ENCODE measurements at regions of chr6 and their contacts with region 1.

Region 1: GRCh38 chr6:117555882-117556498 is 46.3 kb downstream of the GOPC start:
- DNase-seq: peak in 2 of 4 donors; percentile 51 to 60
- ATAC-seq: peak; percentile 69
- H3K4me3 ChIP-seq: no peak overlapping the region
- H3K27ac ChIP-seq: no peak overlapping the region
- H3K4me1 ChIP-seq: peaks cover 0 to 4% of the 10 kb centered on the region in 2 donors
- H3K27me3 ChIP-seq: no peaks in the 10 kb centered on the region
- CTCF ChIP-seq: peak; percentile 78 to 84

Region 2: GRCh38 chr6:117449549-117450439 is 106.2 kb before region 1 on chr6:
- intact Hi-C with region 1: loop called (anchors 10 kb)
- DNase-seq: peak; percentile 40 to 82 (median 59)
- ATAC-seq: peak; percentile 57
- H3K4me3 ChIP-seq: no peak overlapping the region
- H3K27ac ChIP-seq: peak overlapping the region; percentile 51 to 80
- H3K4me1 ChIP-seq: peaks cover 7 to 18% of the 10 kb centered on the region in 2 donors
- H3K27me3 ChIP-seq: peaks cover 0 to 17% of the 10 kb centered on the region in 2 donors
- CTCF ChIP-seq: peak; percentile 59 to 73

Region 3: GRCh38 chr6:117482240-117483003 is 73.6 kb before region 1 on chr6 and contains the start of gene DCBLD1:
- intact Hi-C with region 1: no loop called
- DNase-seq: peak; percentile 75 to 94 (median 84)
- ATAC-seq: peak; percentile 85
- H3K4me3 ChIP-seq: peak within 1 kb of the TSS; percentile 57 to 62
- H3K27ac ChIP-seq: peak within 1 kb of the TSS; percentile 82 to 91
- H3K4me1 ChIP-seq: peaks cover 2 to 42% of the 10 kb centered on the region in 2 donors
- H3K27me3 ChIP-seq: peaks cover 0 to 47% of the 10 kb centered on the region in 2 donors
- CTCF ChIP-seq: no peak
- polyA plus RNA-seq, gene DCBLD1: 28.2 to 49.3 (median 35.8) TPM

Region 4: DNA sequence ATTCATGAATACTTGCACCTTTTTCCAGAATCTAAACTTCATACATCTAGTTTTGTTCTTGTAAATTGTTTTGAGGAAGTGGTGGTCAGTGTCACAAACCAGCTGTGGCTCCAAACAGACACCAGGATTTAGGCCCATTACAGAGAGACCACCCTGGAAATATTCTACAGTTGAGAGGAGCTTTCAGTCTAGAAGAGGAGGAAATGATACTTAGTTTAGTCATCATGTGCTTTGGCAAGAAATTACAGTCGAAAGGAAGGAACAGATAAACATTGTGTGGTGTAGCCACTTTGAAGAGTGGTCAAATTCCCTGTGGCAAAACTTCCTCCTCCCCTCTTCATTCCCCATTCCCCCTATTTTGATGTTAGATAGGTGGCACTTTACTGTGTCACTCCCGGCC is 57.8 kb before region 1 on chr6:
- intact Hi-C with region 1: no loop called
- DNase-seq: peak in 2 of 4 donors; percentile 33 to 60
- ATAC-seq: peak; percentile 66
- H3K4me3 ChIP-seq: no peak overlapping the region
- H3K27ac ChIP-seq: peak overlapping the region; percentile 57 to 77
- H3K4me1 ChIP-seq: peaks cover 47 to 58% of the 10 kb centered on the region in 2 donors
- H3K27me3 ChIP-seq: no peaks in the 10 kb centered on the region
- CTCF ChIP-seq: no peak

Region 5: DNA sequence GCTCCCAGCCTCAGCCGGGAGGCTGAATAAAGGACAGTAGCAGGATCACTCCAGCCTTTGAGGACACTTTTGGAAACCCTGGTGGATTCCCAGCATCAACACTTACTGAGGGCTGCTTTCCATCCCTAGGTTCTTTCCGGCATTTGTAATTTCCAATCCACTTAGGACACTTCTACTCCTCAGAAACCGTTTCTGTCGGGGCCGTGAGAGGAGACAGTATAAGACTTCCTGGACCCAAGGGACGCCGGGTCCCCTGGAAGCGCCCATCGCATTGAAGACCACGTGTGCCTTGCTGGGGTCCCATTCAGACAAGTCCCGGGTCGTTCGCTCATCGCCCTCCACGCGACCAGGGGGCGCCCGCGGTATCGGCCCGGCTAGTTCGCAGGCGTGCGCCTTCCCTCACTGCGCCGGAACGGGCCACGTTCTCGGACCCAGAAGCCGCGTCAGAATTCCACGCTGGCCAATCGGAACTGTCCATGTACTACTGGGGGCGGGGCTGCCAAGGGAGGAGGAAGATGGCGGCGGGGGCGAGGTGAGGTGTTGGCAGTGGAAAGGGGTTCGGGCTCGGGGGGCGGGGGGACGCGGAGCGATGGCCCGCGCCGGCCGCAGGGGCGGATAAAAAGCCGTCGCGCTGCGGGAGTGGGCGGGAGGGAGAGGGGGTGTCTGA is 119.1 kb after region 1 on chr6 and contains the start of gene NUS1:
- intact Hi-C with region 1: no loop called
- DNase-seq: peak; percentile 96 to 98 (median 98)
- ATAC-seq: peak; percentile 99
- H3K4me3 ChIP-seq: peak within 1 kb of the TSS; percentile 57 to 71
- H3K27ac ChIP-seq: peak within 1 kb of the TSS; percentile 39 to 77
- H3K4me1 ChIP-seq: peaks cover 14 to 39% of the 10 kb centered on the region in 2 donors
- H3K27me3 ChIP-seq: no peaks in the 10 kb centered on the region
- CTCF ChIP-seq: peak; percentile 55 to 73
- polyA plus RNA-seq, gene NUS1: 38.2 to 44.2 (median 41.2) TPM